Heart left ventricle (tissue), 16 donors: ENCODE measurements at regions of chr15 and their contacts with region 1.

Region 1: GRCh38 chr15:43524254-43524845 is 6.9 kb downstream of the MAP1A start:
- DNase-seq: no peak
- ATAC-seq: no peak
- H3K4me3 ChIP-seq: no peak overlapping the region
- H3K27ac ChIP-seq: no peak overlapping the region
- H3K4me1 ChIP-seq: peaks cover 0 to 3% (median 0%) of the 10 kb centered on the region in 12 donors
- H3K27me3 ChIP-seq: no peaks in the 10 kb centered on the region
- CTCF ChIP-seq: no peak
- POLR2A ChIP-seq: no peak

Region 2: DNA sequence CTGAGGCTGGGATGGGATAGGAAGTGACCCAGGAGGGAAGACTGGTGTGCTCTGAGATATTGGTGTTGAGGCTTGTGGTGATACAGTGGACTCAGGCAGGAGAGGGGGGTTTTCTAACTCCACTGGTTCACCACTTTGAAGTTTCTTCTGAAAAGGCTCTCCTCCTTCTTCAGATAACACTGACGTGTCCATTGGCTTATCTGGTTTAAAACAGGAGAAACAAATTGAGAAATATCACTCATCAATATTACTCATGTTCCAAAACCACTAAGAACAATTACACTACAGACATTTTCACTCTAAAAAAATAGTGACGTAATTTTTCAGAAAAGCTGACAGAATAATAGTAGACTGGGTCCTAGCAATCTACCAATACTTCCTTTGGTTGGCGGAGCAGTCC is 54.5 kb before region 1 on chr15:
- intact Hi-C with region 1: loop called in 1 of 10 experiments (anchors 10 kb)
- DNase-seq: no peak
- ATAC-seq: no peak
- H3K4me3 ChIP-seq: no peak overlapping the region
- H3K27ac ChIP-seq: no peak overlapping the region
- H3K4me1 ChIP-seq: peaks cover 0 to 8% (median 0%) of the 10 kb centered on the region in 12 donors
- H3K27me3 ChIP-seq: no peaks in the 10 kb centered on the region
- CTCF ChIP-seq: no peak
- POLR2A ChIP-seq: no peak

Region 3: DNA sequence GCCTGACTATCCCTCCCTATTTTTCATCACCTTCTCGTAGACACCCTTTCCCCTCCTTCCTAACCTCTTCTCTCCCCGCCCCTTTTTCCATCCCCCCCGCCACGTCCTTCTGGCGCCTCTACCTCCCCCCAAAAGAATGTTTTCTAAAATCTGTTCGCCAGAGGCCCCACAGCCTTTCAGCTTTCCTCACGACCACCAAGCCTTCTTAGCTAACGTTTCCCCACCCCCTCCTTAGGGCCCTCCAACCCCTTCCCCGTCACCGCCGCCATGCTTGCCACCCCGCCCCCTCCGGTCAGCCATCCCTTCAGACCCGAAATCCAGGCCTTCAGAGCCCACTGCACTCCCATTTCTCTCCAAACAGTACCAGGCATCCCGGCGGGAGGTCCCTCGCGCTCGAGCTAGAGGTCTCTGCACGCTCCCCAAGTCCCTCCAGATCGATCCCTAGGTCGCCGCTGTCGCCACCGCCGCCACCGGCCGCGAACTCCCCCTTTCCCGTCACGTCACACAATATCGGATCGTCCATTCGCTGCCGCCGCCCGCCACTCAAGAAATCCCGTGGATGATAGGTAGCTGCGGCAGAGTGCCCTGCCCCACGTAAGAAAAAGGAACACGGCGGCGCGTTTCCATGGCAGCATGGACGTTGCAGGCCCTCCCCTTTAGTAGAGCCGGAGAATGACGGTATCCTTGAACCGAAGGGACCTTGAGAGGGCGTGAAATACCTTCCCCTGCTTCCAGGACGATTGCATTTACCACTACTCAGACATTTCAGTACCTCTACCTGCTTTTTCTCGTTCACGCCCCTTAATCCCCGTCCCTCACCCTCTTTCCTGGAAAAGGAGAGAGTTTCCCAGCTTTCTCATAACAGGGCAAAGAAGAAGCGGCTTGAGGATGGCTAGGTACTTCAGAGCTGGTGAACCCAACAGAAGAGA is 31.4 kb before region 1 on chr15 and contains the start of gene TP53BP1:
- intact Hi-C with region 1: loop called in 1 of 10 experiments (anchors 5 kb)
- DNase-seq: peak; percentile 97 to 99 (median 97)
- ATAC-seq: peak; percentile 99 to 100 (median 100)
- H3K4me3 ChIP-seq: peak within 1 kb of the TSS; percentile 63 to 84 (median 78)
- H3K27ac ChIP-seq: peak within 1 kb of the TSS in 11 of 12 donors; percentile 48 to 88 (median 83)
- H3K4me1 ChIP-seq: peaks cover 0 to 29% (median 21%) of the 10 kb centered on the region in 12 donors
- H3K27me3 ChIP-seq: no peaks in the 10 kb centered on the region
- CTCF ChIP-seq: no peak
- POLR2A ChIP-seq: no peak
- total RNA-seq, gene TP53BP1: 22.7 to 34.4 (median 27.8) TPM